Caco-2 (cell line): ENCODE measurements at regions of chr20 and their contacts with region 1.

Region 1: DNA sequence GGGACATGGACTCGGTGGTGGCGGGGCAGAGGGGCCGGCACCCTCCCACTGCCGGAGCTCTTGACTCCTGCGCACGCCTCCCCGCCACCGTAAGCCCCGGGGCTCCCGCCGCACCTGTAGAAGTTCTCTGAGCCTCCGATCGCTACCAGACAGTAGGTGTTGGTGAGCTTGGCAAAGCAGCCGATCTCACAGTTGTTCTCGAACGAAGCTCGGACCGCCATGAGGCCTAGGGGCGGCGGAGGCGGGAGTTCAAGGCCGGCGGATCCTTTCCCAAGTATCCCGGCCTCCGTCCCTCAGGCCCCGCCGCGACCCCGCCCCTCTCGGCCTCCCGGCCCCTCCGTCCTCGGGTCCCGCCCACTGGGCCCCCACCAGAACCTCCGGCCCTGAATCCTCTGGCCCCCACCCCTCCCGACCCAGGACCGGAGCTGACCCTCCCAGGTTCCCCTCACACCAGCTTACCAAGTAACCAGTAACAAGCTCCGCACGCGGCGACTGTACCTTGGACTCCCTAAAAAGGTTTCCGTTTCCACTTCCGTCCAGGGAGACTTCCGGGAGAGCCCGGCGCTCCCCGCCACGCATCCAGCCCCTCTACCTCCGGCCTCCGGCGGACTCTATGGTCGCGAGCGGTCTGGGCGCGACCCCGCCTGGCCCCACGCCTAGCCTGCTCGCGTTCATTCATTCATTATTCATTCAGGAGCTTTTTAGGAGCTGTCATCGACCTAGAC is at the start of gene EIF6:
- DNase-seq: peak; percentile 97 to 98
- H3K4me3 ChIP-seq: peak within 1 kb of the TSS; percentile 95
- H3K4me3 Mint-ChIP-seq: peak within 1 kb of the TSS; percentile 84
- H3K27ac Mint-ChIP-seq: peak within 1 kb of the TSS; percentile 87
- H3K4me1 ChIP-seq: peaks cover 28% of the 10 kb centered on the region
- H3K4me1 Mint-ChIP-seq: peaks cover 18% of the 10 kb centered on the region
- H3K27me3 ChIP-seq: no peaks in the 10 kb centered on the region
- H3K27me3 Mint-ChIP-seq: no peaks in the 10 kb centered on the region
- CTCF ChIP-seq: no peak
- total RNA-seq, gene EIF6: 403 and 420 TPM in 2 replicates

Region 2: GRCh38 chr20:35120012-35120701 is 164.3 kb before region 1 on chr20:
- CTCF ChIA-PET with region 1: no interaction called
- POLR2A ChIA-PET with region 1: interaction called, 12 read pairs
- intact Hi-C with region 1: no loop called
- DNase-seq: no peak
- H3K4me3 ChIP-seq: no peak overlapping the region
- H3K4me3 Mint-ChIP-seq: no peak overlapping the region
- H3K27ac Mint-ChIP-seq: no peak overlapping the region
- H3K4me1 ChIP-seq: no peaks in the 10 kb centered on the region
- H3K4me1 Mint-ChIP-seq: peaks cover 8% of the 10 kb centered on the region
- H3K27me3 ChIP-seq: no peaks in the 10 kb centered on the region
- H3K27me3 Mint-ChIP-seq: no peaks in the 10 kb centered on the region
- CTCF ChIP-seq: no peak

Region 3: GRCh38 chr20:35329435-35330139 is 45.2 kb after region 1 on chr20:
- CTCF ChIA-PET with region 1: interaction called, 9 read pairs
- POLR2A ChIA-PET with region 1: interaction called, 6 read pairs
- intact Hi-C with region 1: loop called (anchors 1 kb)
- DNase-seq: peak; percentile 91 to 93
- H3K4me3 ChIP-seq: no peak overlapping the region
- H3K4me3 Mint-ChIP-seq: no peak overlapping the region
- H3K27ac Mint-ChIP-seq: peak overlapping the region; percentile 69
- H3K4me1 ChIP-seq: peaks cover 55% of the 10 kb centered on the region
- H3K4me1 Mint-ChIP-seq: peaks cover 32% of the 10 kb centered on the region
- H3K27me3 ChIP-seq: no peaks in the 10 kb centered on the region
- H3K27me3 Mint-ChIP-seq: no peaks in the 10 kb centered on the region
- CTCF ChIP-seq: peak; percentile 92 to 99

Region 4: GRCh38 chr20:35454881-35455609 is 170.6 kb after region 1 on chr20 and contains the start of gene CEP250:
- CTCF ChIA-PET with region 1: no interaction called
- POLR2A ChIA-PET with region 1: interaction called, 19 read pairs
- intact Hi-C with region 1: no loop called
- DNase-seq: peak; percentile 100
- H3K4me3 ChIP-seq: peak within 1 kb of the TSS; percentile 50
- H3K4me3 Mint-ChIP-seq: peak within 1 kb of the TSS; percentile 93
- H3K27ac Mint-ChIP-seq: peak within 1 kb of the TSS; percentile 100
- H3K4me1 ChIP-seq: peaks cover 5% of the 10 kb centered on the region
- H3K4me1 Mint-ChIP-seq: peaks cover 29% of the 10 kb centered on the region
- H3K27me3 ChIP-seq: no peaks in the 10 kb centered on the region
- H3K27me3 Mint-ChIP-seq: no peaks in the 10 kb centered on the region
- CTCF ChIP-seq: no peak
- total RNA-seq, gene CEP250: 117 and 137 TPM in 2 replicates

Region 5: GRCh38 chr20:35478804-35479472 is 194.5 kb after region 1 on chr20:
- CTCF ChIA-PET with region 1: no interaction called
- POLR2A ChIA-PET with region 1: interaction called, 16 read pairs
- intact Hi-C with region 1: no loop called
- DNase-seq: peak; percentile 37 to 60
- H3K4me3 ChIP-seq: no peak overlapping the region
- H3K4me3 Mint-ChIP-seq: no peak overlapping the region
- H3K27ac Mint-ChIP-seq: no peak overlapping the region
- H3K4me1 ChIP-seq: 0 out of 2 replicates have a peak, but pooled peaks cover 4% of the 10 kb centered on the region
- H3K4me1 Mint-ChIP-seq: peaks cover 6% of the 10 kb centered on the region
- H3K27me3 ChIP-seq: no peaks in the 10 kb centered on the region
- H3K27me3 Mint-ChIP-seq: no peaks in the 10 kb centered on the region
- CTCF ChIP-seq: peak; percentile 20 to 33